CD4-positive, alpha-beta memory T cell (primary cell): ENCODE measurements at regions of chr18 and their contacts with region 1.

Region 1: DNA sequence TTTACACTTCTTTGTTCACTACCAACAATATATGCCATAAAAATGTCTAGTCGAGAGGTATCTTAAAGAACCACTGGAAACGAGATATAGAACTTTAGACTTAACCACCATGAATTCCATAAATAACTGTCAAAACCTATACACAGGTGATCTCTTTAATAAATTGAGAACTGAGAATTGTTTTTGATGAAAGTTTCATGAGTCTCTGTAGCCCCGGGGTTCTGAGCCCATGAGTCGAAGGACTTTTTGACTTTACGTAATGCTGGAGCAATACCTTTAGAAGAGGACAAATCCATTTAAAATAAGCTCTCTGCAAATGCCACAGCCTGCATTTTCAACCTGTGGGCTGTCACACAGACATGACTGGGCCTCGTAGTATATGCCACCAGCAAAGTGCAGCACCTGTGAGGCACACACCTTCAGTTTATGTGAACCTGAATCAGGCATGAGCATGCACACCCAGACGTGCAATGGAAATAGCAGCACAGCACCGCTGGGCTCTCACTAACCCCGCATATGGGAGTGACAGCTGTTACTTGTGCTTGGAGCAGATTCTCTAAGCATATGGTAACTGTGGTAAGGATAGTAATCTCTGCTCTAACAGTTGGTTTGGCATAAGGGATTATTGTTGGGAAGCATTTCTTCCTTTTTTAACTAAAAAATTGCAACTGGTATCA is 383.2 kb downstream of the SOCS6 start:
- DNase-seq: peak in 2 of 5 donors; percentile 27 to 50
- H3K4me3 ChIP-seq: no peak overlapping the region
- H3K4me3 Mint-ChIP-seq: peak overlapping the region in 4 of 8 donors; percentile 50 to 73 (median 52)
- H3K27ac ChIP-seq: peak overlapping the region; percentile 43
- H3K27ac Mint-ChIP-seq: peak overlapping the region; percentile 78 to 98 (median 94)
- H3K4me1 ChIP-seq: peaks cover 54% of the 10 kb centered on the region
- H3K4me1 Mint-ChIP-seq: peaks cover 20 to 48% (median 31%) of the 10 kb centered on the region in 4 donors
- H3K27me3 ChIP-seq: no peaks in the 10 kb centered on the region
- H3K27me3 Mint-ChIP-seq: no peaks in the 10 kb centered on the region

Region 2: GRCh38 chr18:69659142-69659651 is 1012.8 kb before region 1 on chr18:
- CTCF ChIA-PET with region 1: no interaction called
- POLR2A ChIA-PET with region 1: no interaction called
- intact Hi-C with region 1: no loop called
- DNase-seq: no peak
- H3K4me3 ChIP-seq: no peak overlapping the region
- H3K4me3 Mint-ChIP-seq: no peak overlapping the region
- H3K27ac ChIP-seq: no peak overlapping the region
- H3K27ac Mint-ChIP-seq: no peak overlapping the region
- H3K4me1 ChIP-seq: no peaks in the 10 kb centered on the region
- H3K4me1 Mint-ChIP-seq: peaks cover 0 to 3% (median 0%) of the 10 kb centered on the region in 4 donors
- H3K27me3 ChIP-seq: no peaks in the 10 kb centered on the region
- H3K27me3 Mint-ChIP-seq: peaks cover 0 to 2% of the 10 kb centered on the region in 2 donors

Region 3: DNA sequence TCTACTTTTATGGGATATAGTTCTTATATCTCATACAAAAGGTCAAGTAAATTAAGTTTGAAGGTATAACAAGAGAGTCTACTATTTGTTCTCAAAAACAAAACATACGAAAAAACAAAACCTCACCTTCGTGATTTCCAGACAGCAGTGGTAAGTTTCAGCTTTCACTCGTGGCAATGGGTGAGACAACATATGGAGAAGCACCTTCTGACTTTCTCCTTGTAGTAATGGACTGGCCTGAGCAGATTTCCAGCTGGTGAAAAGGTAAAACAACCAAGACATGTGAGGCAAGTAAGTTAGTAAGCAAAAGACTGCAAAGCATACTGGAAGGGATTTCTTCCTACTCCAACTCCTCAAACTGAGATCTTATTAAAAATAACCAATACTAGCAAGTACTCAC is 506.1 kb before region 1 on chr18:
- CTCF ChIA-PET with region 1: no interaction called
- POLR2A ChIA-PET with region 1: no interaction called
- intact Hi-C with region 1: no loop called
- DNase-seq: no peak
- H3K4me3 ChIP-seq: no peak overlapping the region
- H3K4me3 Mint-ChIP-seq: peak overlapping the region in 5 of 8 donors; percentile 15 to 44 (median 29)
- H3K27ac ChIP-seq: no peak overlapping the region
- H3K27ac Mint-ChIP-seq: peak overlapping the region in 4 of 7 donors; percentile 1 to 64 (median 20)
- H3K4me1 ChIP-seq: peaks cover 7% of the 10 kb centered on the region
- H3K4me1 Mint-ChIP-seq: peaks cover 5 to 15% (median 9%) of the 10 kb centered on the region in 4 donors
- H3K27me3 ChIP-seq: no peaks in the 10 kb centered on the region
- H3K27me3 Mint-ChIP-seq: no peaks in the 10 kb centered on the region

Region 4: DNA sequence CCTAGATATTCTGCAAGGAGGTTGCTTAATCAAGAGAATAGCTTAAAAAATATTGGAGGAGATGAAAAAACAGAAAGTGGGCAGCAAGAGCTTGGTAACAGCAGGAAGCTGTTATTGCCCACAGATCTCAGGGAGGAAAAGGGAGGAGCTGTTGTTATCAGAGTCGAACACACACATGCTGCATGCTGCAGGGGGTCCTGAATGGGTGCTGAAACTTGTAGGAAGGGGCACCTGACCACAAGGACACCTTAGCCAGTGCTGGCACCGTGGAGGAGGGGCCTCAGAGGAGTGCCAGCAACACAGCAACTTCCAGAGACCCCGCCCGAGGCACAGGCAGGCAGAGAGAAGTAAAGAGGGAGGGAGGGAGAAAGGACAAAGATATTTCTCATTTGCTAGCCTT is 50.3 kb before region 1 on chr18:
- CTCF ChIA-PET with region 1: interaction called, 12 read pairs
- POLR2A ChIA-PET with region 1: interaction called, 45 read pairs
- intact Hi-C with region 1: no loop called
- DNase-seq: peak in 4 of 5 donors; percentile 22 to 33 (median 25)
- H3K4me3 ChIP-seq: peak overlapping the region in 1 of 2 donors; percentile 32
- H3K4me3 Mint-ChIP-seq: peak overlapping the region; percentile 83 to 93 (median 87)
- H3K27ac ChIP-seq: peak overlapping the region; percentile 41
- H3K27ac Mint-ChIP-seq: peak overlapping the region; percentile 86 to 97 (median 96)
- H3K4me1 ChIP-seq: peaks cover 56% of the 10 kb centered on the region
- H3K4me1 Mint-ChIP-seq: peaks cover 24 to 47% (median 35%) of the 10 kb centered on the region in 4 donors
- H3K27me3 ChIP-seq: no peaks in the 10 kb centered on the region
- H3K27me3 Mint-ChIP-seq: peaks cover 0 to 1% of the 10 kb centered on the region in 2 donors

Region 5: GRCh38 chr18:70659036-70659925 is 12.7 kb before region 1 on chr18:
- CTCF ChIA-PET with region 1: interaction called, 25 read pairs
- POLR2A ChIA-PET with region 1: interaction called, 34 read pairs
- intact Hi-C with region 1: loop called (anchors 1 kb)
- DNase-seq: peak; percentile 68 to 80 (median 72)
- H3K4me3 ChIP-seq: no peak overlapping the region
- H3K4me3 Mint-ChIP-seq: peak overlapping the region; percentile 46 to 76 (median 70)
- H3K27ac ChIP-seq: peak overlapping the region; percentile 11
- H3K27ac Mint-ChIP-seq: peak overlapping the region; percentile 81 to 90 (median 87)
- H3K4me1 ChIP-seq: peaks cover 50% of the 10 kb centered on the region
- H3K4me1 Mint-ChIP-seq: peaks cover 23 to 36% (median 27%) of the 10 kb centered on the region in 4 donors
- H3K27me3 ChIP-seq: no peaks in the 10 kb centered on the region
- H3K27me3 Mint-ChIP-seq: no peaks in the 10 kb centered on the region

Region 6: GRCh38 chr18:70683263-70683662 is 11.2 kb after region 1 on chr18:
- CTCF ChIA-PET with region 1: interaction called, 10 read pairs
- POLR2A ChIA-PET with region 1: interaction called, 25 read pairs
- intact Hi-C with region 1: loop called (anchors 1 kb)
- DNase-seq: peak in 4 of 5 donors; percentile 44 to 62 (median 48)
- H3K4me3 ChIP-seq: no peak overlapping the region
- H3K4me3 Mint-ChIP-seq: peak overlapping the region in 5 of 8 donors; percentile 2 to 34 (median 14)
- H3K27ac ChIP-seq: peak overlapping the region; percentile 15
- H3K27ac Mint-ChIP-seq: peak overlapping the region; percentile 60 to 92 (median 84)
- H3K4me1 ChIP-seq: peaks cover 18% of the 10 kb centered on the region
- H3K4me1 Mint-ChIP-seq: peaks cover 8 to 17% (median 13%) of the 10 kb centered on the region in 4 donors
- H3K27me3 ChIP-seq: no peaks in the 10 kb centered on the region
- H3K27me3 Mint-ChIP-seq: no peaks in the 10 kb centered on the region

Region 7: DNA sequence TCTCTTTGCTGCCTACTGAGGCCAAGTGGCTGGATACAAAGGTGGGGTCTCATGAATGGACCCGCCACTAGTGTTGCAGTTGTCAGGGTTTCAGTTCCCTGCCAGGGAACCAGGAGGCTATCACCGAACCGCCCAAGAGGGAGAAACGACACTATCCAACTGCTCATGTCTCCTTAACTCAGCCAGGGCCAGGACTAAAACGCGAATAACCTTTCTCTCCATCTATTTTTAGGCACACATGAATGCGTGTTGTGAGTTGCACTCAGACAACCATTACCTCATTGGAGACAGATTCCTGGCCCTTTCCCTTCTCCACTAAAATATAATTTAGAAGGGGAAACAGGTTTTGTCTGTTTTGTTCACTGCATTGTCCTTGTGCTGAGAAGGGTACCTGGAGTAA is 176.3 kb after region 1 on chr18:
- CTCF ChIA-PET with region 1: no interaction called
- POLR2A ChIA-PET with region 1: no interaction called
- intact Hi-C with region 1: no loop called
- DNase-seq: no peak
- H3K4me3 ChIP-seq: no peak overlapping the region
- H3K4me3 Mint-ChIP-seq: no peak overlapping the region
- H3K27ac ChIP-seq: no peak overlapping the region
- H3K27ac Mint-ChIP-seq: no peak overlapping the region
- H3K4me1 ChIP-seq: no peaks in the 10 kb centered on the region
- H3K4me1 Mint-ChIP-seq: no peaks in the 10 kb centered on the region
- H3K27me3 ChIP-seq: no peaks in the 10 kb centered on the region
- H3K27me3 Mint-ChIP-seq: no peaks in the 10 kb centered on the region

Region 8: GRCh38 chr18:71485611-71486010 is 813.6 kb after region 1 on chr18:
- CTCF ChIA-PET with region 1: no interaction called
- POLR2A ChIA-PET with region 1: no interaction called
- intact Hi-C with region 1: no loop called
- DNase-seq: no peak
- H3K4me3 ChIP-seq: no peak overlapping the region
- H3K4me3 Mint-ChIP-seq: no peak overlapping the region
- H3K27ac ChIP-seq: no peak overlapping the region
- H3K27ac Mint-ChIP-seq: no peak overlapping the region
- H3K4me1 ChIP-seq: no peaks in the 10 kb centered on the region
- H3K4me1 Mint-ChIP-seq: no peaks in the 10 kb centered on the region
- H3K27me3 ChIP-seq: no peaks in the 10 kb centered on the region
- H3K27me3 Mint-ChIP-seq: no peaks in the 10 kb centered on the region